Heart right ventricle (tissue), 16 donors: ENCODE measurements at regions of chr3 and their contacts with region 1.

Region 1: DNA sequence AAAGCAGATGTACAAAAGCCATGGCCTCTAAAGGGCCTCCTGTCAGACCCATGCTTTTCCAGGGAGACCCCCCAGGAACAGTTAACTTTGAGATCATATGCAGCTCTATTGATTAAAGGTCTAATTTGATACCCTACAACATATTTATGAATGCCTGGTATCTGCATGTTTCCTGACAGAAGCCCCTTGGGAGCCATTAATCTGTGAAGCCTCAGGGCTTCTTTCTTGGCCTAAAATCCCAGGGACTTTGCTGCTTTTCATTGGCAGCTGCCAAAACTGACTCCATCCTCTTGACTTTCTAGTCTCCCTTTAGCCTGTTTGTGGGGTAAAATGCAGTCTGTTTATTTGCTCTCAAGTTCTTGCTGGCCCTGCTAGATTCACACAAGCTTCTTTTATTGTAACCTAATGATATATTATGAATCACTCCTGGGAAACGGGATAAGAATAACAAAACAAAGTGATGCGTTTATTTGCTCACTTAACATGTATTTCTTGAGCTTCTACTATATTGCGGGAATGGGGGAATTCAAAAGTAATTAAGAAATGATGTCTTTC is 257.0 kb downstream of the LSAMP start:
- DNase-seq: no peak
- ATAC-seq: no peak
- H3K4me3 ChIP-seq: no peak overlapping the region
- H3K27ac ChIP-seq: no peak overlapping the region
- H3K4me1 ChIP-seq: no peaks in the 10 kb centered on the region
- H3K27me3 ChIP-seq: no peaks in the 10 kb centered on the region
- CTCF ChIP-seq: no peak

Region 2: DNA sequence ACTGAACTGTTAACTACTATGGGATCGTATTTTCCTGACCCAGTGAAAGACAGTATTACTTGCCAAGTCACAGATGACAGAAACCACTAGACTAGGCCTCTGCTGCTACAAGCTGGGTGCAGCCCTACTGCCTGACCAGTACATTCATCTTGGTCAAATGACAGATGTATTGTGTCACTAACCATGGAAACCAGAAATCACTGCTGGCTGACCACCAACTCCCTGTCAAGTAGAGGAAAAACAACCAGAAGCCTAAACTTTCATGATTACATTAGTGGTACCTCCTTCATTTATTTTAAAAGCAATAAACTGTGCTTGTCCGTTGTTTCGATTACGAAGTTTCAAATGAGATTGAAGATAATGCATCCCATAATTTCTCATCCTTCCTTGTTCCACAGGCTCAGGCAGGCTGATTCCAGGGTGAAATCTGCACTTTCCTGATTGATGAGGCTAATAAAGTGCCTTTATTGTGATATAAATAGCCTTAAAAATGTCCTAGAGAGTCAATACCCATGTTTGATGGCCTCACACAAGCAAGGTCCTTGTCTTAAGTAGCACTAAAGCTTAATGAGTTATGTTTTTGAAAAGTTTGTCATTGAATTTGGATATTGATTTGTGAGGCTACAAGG is 52.7 kb before region 1 on chr3:
- intact Hi-C with region 1: no loop called
- DNase-seq: peak; percentile 24 to 45
- ATAC-seq: peak in 7 of 8 donors; percentile 57 to 93 (median 90)
- H3K4me3 ChIP-seq: no peak overlapping the region
- H3K27ac ChIP-seq: peak overlapping the region in 2 of 10 donors; percentile 6 to 49
- H3K4me1 ChIP-seq: peaks cover 0 to 9% (median 0%) of the 10 kb centered on the region in 9 donors
- H3K27me3 ChIP-seq: no peaks in the 10 kb centered on the region
- CTCF ChIP-seq: no peak

Region 3: DNA sequence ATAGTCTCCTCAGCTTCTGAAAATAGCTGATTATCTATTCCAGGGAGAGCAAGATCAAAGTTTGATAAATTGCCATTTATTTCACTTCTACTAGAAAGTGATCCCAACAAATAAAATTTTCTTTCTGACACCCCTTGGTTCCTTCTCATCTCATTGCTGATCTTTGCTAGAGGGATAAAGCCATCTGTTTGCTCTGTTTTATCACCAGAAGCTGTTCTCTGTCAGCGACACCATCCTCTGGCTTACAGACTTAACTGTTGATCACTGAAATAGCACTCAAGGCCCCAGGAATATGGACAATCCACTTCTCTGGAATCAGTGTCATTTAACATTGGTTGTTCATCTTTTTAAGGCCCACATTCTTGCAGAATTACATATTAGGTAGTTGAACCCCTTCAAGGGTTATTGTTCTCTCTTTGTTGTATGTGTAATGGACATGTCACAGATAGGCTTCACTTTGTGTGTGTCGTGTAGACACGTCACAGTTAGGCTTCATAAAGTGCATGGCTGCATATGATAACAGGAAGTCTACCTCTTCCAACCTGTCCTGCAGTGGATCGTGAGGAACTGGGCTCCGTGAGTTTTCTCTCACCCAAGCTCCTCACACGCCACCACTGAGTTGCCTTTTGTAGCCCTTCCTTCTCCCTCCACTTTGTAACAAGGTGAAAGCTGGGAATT is 38.1 kb after region 1 on chr3:
- intact Hi-C with region 1: loop called in 1 of 10 experiments (anchors 1 kb)
- DNase-seq: no peak
- ATAC-seq: no peak
- H3K4me3 ChIP-seq: no peak overlapping the region
- H3K27ac ChIP-seq: no peak overlapping the region
- H3K4me1 ChIP-seq: no peaks in the 10 kb centered on the region
- H3K27me3 ChIP-seq: no peaks in the 10 kb centered on the region
- CTCF ChIP-seq: no peak

Region 4: GRCh38 chr3:116716490-116716889 is 528.2 kb after region 1 on chr3:
- intact Hi-C with region 1: no loop called
- DNase-seq: no peak
- ATAC-seq: no peak
- H3K4me3 ChIP-seq: no peak overlapping the region
- H3K27ac ChIP-seq: no peak overlapping the region
- H3K4me1 ChIP-seq: no peaks in the 10 kb centered on the region
- H3K27me3 ChIP-seq: no peaks in the 10 kb centered on the region
- CTCF ChIP-seq: no peak